Testis (tissue), 5 donors: ENCODE measurements at regions of chr1 and their contacts with region 1.

Region 1: DNA sequence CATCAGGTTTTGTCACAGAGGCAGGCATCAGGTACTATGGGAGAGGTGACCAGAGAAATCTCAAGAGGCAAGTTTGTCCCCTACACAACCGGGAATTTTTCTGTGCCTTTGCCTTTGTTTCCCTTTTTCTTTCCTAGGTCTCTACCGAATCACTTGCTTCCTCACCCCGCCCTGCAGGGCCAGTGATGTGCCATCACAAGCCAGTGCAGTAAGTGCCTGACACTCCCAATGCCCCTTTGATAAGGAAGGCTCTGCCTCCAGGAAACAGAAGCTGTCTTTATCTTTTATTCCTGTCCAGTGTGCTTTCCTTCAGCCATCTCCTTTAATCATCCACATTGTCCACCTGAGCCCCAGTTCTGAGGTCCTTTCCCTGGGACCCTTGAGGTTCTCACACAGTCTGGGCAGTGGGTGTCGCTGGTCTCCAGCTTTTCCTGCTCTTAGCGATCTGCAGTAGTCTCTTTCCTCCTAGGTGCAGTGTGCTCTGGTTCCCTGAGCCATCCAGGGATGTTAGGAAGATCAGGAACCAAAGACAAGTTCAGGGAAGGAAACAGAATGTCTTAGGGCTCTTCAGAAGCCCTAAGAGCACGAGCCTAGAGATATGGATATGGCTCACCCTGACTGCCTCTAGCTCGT is 36.6 kb downstream of the GJA5 start:
- DNase-seq: peak; percentile 36
- H3K4me3 ChIP-seq: no peak overlapping the region
- H3K27ac ChIP-seq: no peak overlapping the region
- H3K4me1 ChIP-seq: no peaks in the 10 kb centered on the region
- H3K27me3 ChIP-seq: no peaks in the 10 kb centered on the region
- CTCF ChIP-seq: peak in 1 of 3 experiments; percentile 15
- POLR2A ChIP-seq: no peak

Region 2: GRCh38 chr1:147853391-147853790 is 129.6 kb after region 1 on chr1:
- intact Hi-C with region 1: no loop called
- DNase-seq: no peak
- H3K4me3 ChIP-seq: no peak overlapping the region
- H3K27ac ChIP-seq: no peak overlapping the region
- H3K4me1 ChIP-seq: no peaks in the 10 kb centered on the region
- H3K27me3 ChIP-seq: no peaks in the 10 kb centered on the region
- CTCF ChIP-seq: no peak
- POLR2A ChIP-seq: no peak

Region 3: GRCh38 chr1:147882535-147882934 is 158.7 kb after region 1 on chr1:
- intact Hi-C with region 1: loop called (anchors 10 kb)
- DNase-seq: no peak
- H3K4me3 ChIP-seq: no peak overlapping the region
- H3K27ac ChIP-seq: no peak overlapping the region
- H3K4me1 ChIP-seq: no peaks in the 10 kb centered on the region
- H3K27me3 ChIP-seq: no peaks in the 10 kb centered on the region
- CTCF ChIP-seq: no peak
- POLR2A ChIP-seq: no peak